ENCODE measurements at regions of chr6 and their contacts with region 1.

Region 1: GRCh38 chr6:151014404-151015100 is 149.1 kb downstream of the MTHFD1L start:
- DNase-seq: peak; percentile 64 to 78
- H3K4me3 ChIP-seq: no peak overlapping the region
- H3K27ac ChIP-seq: peak overlapping the region in 1 of 2 donors; percentile 5
- H3K4me1 ChIP-seq: peaks cover 0 to 4% (median 0%) of the 10 kb centered on the region in 4 donors
- H3K27me3 ChIP-seq: no peaks in the 10 kb centered on the region
- CTCF ChIP-seq: peak; percentile 95 to 98

Region 2: GRCh38 chr6:151087861-151088598 is 73.5 kb after region 1 on chr6:
- intact Hi-C with region 1: no loop called
- DNase-seq: peak in 1 of 2 donors; percentile 50
- H3K4me3 ChIP-seq: no peak overlapping the region
- H3K27ac ChIP-seq: peak overlapping the region in 1 of 2 donors; percentile 12
- H3K4me1 ChIP-seq: peaks cover 0 to 11% (median 6%) of the 10 kb centered on the region in 4 donors
- H3K27me3 ChIP-seq: no peaks in the 10 kb centered on the region
- CTCF ChIP-seq: no peak

Region 3: GRCh38 chr6:151148111-151148510 is 133.6 kb after region 1 on chr6:
- intact Hi-C with region 1: no loop called
- DNase-seq: no peak
- H3K4me3 ChIP-seq: no peak overlapping the region
- H3K27ac ChIP-seq: no peak overlapping the region
- H3K4me1 ChIP-seq: no peaks in the 10 kb centered on the region
- H3K27me3 ChIP-seq: no peaks in the 10 kb centered on the region
- CTCF ChIP-seq: no peak

Region 4: DNA sequence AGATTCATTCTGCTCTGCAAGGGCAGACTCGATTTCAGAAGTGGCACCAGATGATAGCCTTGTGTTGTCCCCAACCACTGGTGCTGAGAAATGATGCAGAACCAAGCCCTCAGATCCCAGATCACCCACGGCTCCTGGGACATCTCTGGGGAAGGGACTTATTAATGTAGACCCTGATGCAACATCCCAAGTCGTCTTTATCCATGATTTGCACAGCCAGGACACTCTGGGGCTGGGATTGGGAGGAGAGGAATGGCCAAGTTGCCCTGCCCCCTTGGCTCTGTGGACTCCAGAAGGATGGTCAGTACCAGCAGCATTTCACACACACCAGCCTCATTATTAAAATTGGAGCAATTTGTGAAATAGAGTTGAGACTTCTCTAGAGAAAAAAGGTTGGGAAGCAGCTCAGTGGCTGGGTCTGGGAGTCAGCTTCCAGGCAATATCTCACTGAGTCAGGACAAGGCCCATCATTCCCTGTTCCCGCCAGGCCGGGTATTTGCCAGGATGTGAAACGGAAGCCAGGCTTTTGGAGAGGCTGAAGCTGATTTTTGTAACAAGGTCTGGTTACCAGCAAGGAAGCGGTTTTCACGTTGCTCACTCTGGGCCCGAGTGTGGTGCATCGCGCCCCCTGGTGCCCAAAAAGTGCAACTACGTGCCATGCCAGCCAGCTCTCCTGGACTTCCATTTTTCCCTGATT is 309.4 kb after region 1 on chr6:
- intact Hi-C with region 1: loop called (anchors 2 kb)
- DNase-seq: peak; percentile 89 to 94
- H3K4me3 ChIP-seq: peak overlapping the region in 1 of 2 donors; percentile 61
- H3K27ac ChIP-seq: peak overlapping the region; percentile 19 to 70
- H3K4me1 ChIP-seq: peaks cover 5 to 24% (median 16%) of the 10 kb centered on the region in 4 donors
- H3K27me3 ChIP-seq: no peaks in the 10 kb centered on the region
- CTCF ChIP-seq: peak; percentile 98 to 99

Region 5: DNA sequence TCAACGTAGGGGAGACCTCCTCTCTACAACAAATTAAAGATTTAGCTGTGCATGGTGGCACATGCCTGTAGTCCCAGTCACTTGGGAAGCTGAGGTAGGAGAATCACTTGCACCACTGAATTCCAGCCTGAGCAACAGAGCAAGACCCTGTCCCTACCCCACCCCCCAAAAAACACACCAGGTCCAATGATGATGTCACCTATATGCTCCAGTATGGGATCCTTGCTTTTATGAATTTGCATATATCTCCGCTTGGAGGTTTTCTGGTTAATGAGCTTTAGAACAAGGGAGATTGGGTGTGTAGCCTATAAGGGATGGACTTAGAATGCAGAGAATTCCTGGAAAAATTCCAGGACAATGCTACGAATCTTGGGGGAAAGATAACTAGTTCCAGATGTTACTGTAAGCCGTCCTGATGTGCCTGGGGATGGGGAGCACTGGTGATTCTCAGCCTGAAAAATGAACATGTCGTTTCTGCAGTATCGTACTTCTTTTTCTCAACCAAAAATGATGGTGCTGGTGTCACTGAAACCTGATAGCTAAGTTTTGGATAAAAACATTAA is 315.7 kb after region 1 on chr6:
- intact Hi-C with region 1: loop called (anchors 2 kb)
- DNase-seq: no peak
- H3K4me3 ChIP-seq: no peak overlapping the region
- H3K27ac ChIP-seq: no peak overlapping the region
- H3K4me1 ChIP-seq: peaks cover 0 to 11% (median 2%) of the 10 kb centered on the region in 4 donors
- H3K27me3 ChIP-seq: no peaks in the 10 kb centered on the region
- CTCF ChIP-seq: no peak